ENCODE measurements at regions of chr1 and their contacts with region 1.

Region 1: DNA sequence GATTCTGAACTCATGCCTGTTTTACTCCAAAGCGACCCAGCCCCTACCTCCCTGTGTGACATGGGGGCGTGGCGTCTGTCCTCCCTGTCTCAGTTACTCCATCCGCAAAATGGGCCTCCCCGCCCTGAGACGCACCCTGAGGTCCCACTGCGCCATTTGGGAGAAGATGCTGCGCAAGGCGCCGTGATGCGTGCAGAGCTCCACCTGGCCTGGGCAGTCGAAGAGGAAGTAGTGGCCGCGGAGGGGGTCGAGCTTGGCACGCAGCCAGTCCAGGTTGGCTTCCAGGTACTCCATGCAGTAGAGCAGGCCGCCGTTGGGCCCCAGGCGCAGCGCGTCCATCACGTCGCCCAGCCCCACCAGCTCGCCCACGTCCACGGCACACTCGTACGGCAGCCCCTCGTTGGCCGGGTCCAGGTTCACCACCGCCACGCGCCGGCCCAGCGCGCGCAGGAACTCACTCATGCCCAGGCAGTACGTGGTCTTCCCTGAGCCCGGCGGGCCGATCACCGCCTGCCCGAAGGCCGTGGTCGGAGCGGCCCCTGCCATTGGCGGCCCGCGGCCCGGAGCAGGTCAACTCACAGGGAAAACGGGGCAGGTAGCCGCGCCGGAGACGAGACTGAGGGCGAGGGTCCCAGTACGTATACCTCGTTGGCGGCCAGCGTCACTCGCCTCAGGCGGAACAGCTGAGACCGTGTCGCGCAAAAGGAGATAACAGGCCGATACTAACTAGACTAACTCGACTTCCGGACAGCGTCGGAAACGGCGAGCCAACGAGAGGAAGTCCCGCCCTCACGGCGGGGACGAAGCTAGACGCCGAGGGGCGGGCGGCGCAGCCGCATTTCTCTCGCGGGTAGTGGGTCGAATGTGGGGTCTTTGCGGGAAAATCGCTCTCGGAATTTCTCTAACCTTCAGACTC is at the start of gene GPN2:
- DNase-seq: no peak
- H3K4me3 ChIP-seq: peak within 1 kb of the TSS; percentile 98
- H3K27ac ChIP-seq: peak within 1 kb of the TSS; percentile 80
- H3K27me3 ChIP-seq: no peaks in the 10 kb centered on the region
- CTCF ChIP-seq: no peak
- polyA plus RNA-seq, gene GPN2: 28.7 and 40.3 TPM in 2 replicates

Region 2: GRCh38 chr1:26826261-26827105 is 63.3 kb before region 1 on chr1 and contains the start of gene ZDHHC18:
- CTCF ChIA-PET with region 1: no interaction called
- POLR2A ChIA-PET with region 1: interaction called, 11 read pairs
- DNase-seq: no peak
- H3K4me3 ChIP-seq: peak within 1 kb of the TSS; percentile 75
- H3K27ac ChIP-seq: peak within 1 kb of the TSS; percentile 39
- H3K27me3 ChIP-seq: no peaks in the 10 kb centered on the region
- CTCF ChIP-seq: peak; percentile 28; the same call in 1 of the 2 replicates
- polyA plus RNA-seq, gene ZDHHC18: 20.4 and 29.2 TPM in 2 replicates

Region 3: GRCh38 chr1:26864610-26865527 is 24.9 kb before region 1 on chr1:
- CTCF ChIA-PET with region 1: interaction called, 5 read pairs
- POLR2A ChIA-PET with region 1: interaction called, 12 read pairs
- DNase-seq: peak; percentile 96
- H3K4me3 ChIP-seq: peak overlapping the region; percentile 73
- H3K27ac ChIP-seq: peak overlapping the region; percentile 97
- H3K27me3 ChIP-seq: no peaks in the 10 kb centered on the region
- CTCF ChIP-seq: no peak

Region 4: GRCh38 chr1:26900001-26900814 is 10.4 kb after region 1 on chr1 and contains the start of gene GPATCH3:
- CTCF ChIA-PET with region 1: interaction called, 3 read pairs
- POLR2A ChIA-PET with region 1: interaction called, 24 read pairs
- DNase-seq: peak; percentile 88
- H3K4me3 ChIP-seq: peak within 1 kb of the TSS; percentile 95
- H3K27ac ChIP-seq: peak within 1 kb of the TSS; percentile 85
- H3K27me3 ChIP-seq: no peaks in the 10 kb centered on the region
- CTCF ChIP-seq: no peak
- polyA plus RNA-seq, gene GPATCH3: 6.2 and 6.5 TPM in 2 replicates

Region 5: GRCh38 chr1:27203946-27204345 is 314.1 kb after region 1 on chr1:
- CTCF ChIA-PET with region 1: no interaction called
- POLR2A ChIA-PET with region 1: interaction called, 10 read pairs
- DNase-seq: no peak
- H3K4me3 ChIP-seq: no peak overlapping the region
- H3K27ac ChIP-seq: no peak overlapping the region
- H3K27me3 ChIP-seq: peaks cover 11% of the 10 kb centered on the region
- CTCF ChIP-seq: no peak